ENCODE measurements at regions of chr11 and their contacts with region 1.

Region 1: DNA sequence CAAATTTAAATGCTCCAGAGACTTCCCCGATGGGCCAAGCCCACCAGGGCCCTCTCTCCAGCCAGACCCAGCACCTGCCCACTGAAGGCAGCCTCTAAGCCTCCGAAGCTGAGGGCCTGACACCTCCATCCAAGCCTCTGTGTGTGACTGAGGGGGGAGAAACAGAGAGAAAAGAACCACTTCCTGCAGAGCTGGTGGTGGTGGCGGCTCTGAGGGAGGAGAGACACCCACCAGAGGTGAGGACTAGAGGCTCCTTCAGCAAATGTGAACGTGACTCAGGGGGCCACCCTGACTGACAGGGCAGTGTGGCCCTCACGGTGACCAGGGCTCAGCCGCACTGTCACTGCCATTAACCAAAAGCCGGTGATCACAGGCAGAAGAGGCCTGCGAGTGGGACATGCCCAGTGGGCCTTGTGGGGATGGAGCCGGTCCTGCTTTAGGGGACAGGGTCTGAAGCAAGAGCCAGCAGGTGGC is 31.0 kb upstream of the CD5 start:
- DNase-seq: peak; percentile 37 to 88 (median 63)
- ATAC-seq: peak; percentile 95
- H3K4me3 ChIP-seq: no peak overlapping the region
- H3K4me3 Mint-ChIP-seq: peak overlapping the region; percentile 82
- H3K27ac ChIP-seq: peak overlapping the region; percentile 26 to 58
- H3K27ac Mint-ChIP-seq: peak overlapping the region; percentile 92
- H3K4me1 ChIP-seq: peaks cover 80% of the 10 kb centered on the region
- H3K4me1 Mint-ChIP-seq: peaks cover 95% of the 10 kb centered on the region
- H3K27me3 ChIP-seq: no peaks in the 10 kb centered on the region
- H3K27me3 Mint-ChIP-seq: no peaks in the 10 kb centered on the region
- CTCF ChIP-seq: no peak

Region 2: DNA sequence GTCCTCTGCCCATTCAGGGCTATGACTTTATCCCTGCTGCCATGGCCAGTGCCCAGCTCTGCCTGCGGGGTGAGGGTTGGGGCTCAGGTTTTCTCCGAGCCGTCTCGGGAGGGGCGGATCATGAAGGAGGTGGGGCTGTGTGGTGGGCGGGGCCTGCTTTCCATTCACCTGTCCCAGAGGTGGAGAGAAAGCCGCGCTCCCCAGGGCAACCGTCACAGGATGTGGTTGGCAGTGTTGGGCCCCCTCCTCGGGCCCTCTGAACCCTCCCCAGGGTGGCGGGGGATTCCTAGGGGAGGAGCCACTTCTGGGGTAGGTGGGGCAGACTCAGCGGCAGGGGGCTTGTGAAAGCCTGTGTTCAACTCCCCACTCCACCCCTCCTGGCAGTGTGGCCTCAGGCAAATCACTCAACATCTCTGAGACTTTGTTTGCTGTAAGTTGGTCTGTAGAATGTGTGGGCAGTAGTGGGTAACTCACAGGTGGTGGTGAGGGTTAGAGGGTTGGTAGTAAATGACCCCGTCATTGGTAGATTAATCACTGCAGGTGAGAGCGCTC is 49.5 kb before region 1 on chr11:
- CTCF ChIA-PET with region 1: interaction called, 7 read pairs
- POLR2A ChIA-PET with region 1: interaction called, 23 read pairs
- intact Hi-C with region 1: no loop called
- DNase-seq: peak; percentile 82 to 97 (median 92)
- ATAC-seq: peak; percentile 71
- H3K4me3 ChIP-seq: peak overlapping the region; percentile 21
- H3K4me3 Mint-ChIP-seq: peak overlapping the region; percentile 87
- H3K27ac ChIP-seq: peak overlapping the region; percentile 81 to 88
- H3K27ac Mint-ChIP-seq: peak overlapping the region; percentile 99
- H3K4me1 ChIP-seq: peaks cover 85% of the 10 kb centered on the region
- H3K4me1 Mint-ChIP-seq: peaks cover 85% of the 10 kb centered on the region
- H3K27me3 ChIP-seq: no peaks in the 10 kb centered on the region
- H3K27me3 Mint-ChIP-seq: no peaks in the 10 kb centered on the region
- CTCF ChIP-seq: no peak

Region 3: GRCh38 chr11:61049859-61050258 is 21.4 kb before region 1 on chr11:
- CTCF ChIA-PET with region 1: no interaction called
- POLR2A ChIA-PET with region 1: interaction called, 237 read pairs
- intact Hi-C with region 1: no loop called
- DNase-seq: no peak
- ATAC-seq: no peak
- H3K4me3 ChIP-seq: no peak overlapping the region
- H3K4me3 Mint-ChIP-seq: no peak overlapping the region
- H3K27ac ChIP-seq: no peak overlapping the region
- H3K27ac Mint-ChIP-seq: peak overlapping the region; percentile 81
- H3K4me1 ChIP-seq: peaks cover 44% of the 10 kb centered on the region
- H3K4me1 Mint-ChIP-seq: peaks cover 76% of the 10 kb centered on the region
- H3K27me3 ChIP-seq: no peaks in the 10 kb centered on the region
- H3K27me3 Mint-ChIP-seq: no peaks in the 10 kb centered on the region
- CTCF ChIP-seq: no peak

Region 4: DNA sequence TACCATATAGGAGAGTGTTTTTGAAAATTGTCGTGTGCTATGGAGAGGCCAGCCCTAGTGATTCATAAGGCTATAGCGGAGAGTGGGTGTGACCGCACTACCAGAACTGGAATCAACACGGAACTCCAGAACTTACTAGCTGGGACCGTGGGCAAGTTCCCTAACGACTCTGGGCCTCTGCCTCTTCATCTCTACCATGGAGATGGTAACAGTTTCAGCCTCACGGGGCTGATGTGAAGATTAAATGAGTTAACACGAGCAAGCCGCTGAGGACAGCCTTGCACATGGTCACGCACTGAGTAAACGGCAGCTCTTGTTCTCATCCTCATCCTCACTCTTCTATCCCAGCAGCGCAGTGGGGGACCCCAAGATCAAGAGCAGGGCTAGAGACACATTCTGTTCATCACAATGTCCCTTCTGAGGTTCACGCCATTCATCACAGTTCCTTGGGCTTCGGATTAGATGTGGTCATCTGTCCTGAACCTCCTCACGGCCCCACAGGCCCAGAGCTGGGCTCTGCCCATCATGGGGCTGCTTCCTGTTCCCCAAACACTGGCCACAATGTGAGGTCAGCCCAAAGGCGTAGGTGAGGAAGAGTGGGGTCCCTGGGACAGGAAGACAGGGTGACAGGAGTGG is 16.2 kb before region 1 on chr11:
- CTCF ChIA-PET with region 1: no interaction called
- POLR2A ChIA-PET with region 1: interaction called, 64 read pairs
- intact Hi-C with region 1: loop called in 1 of 2 experiments (anchors 2 kb)
- DNase-seq: peak in 1 of 14 experiments; percentile 7
- ATAC-seq: no peak
- H3K4me3 ChIP-seq: no peak overlapping the region
- H3K4me3 Mint-ChIP-seq: peak overlapping the region; percentile 54
- H3K27ac ChIP-seq: no peak overlapping the region
- H3K27ac Mint-ChIP-seq: peak overlapping the region; percentile 85
- H3K4me1 ChIP-seq: peaks cover 65% of the 10 kb centered on the region
- H3K4me1 Mint-ChIP-seq: peaks cover 65% of the 10 kb centered on the region
- H3K27me3 ChIP-seq: no peaks in the 10 kb centered on the region
- H3K27me3 Mint-ChIP-seq: no peaks in the 10 kb centered on the region
- CTCF ChIP-seq: no peak

Region 5: DNA sequence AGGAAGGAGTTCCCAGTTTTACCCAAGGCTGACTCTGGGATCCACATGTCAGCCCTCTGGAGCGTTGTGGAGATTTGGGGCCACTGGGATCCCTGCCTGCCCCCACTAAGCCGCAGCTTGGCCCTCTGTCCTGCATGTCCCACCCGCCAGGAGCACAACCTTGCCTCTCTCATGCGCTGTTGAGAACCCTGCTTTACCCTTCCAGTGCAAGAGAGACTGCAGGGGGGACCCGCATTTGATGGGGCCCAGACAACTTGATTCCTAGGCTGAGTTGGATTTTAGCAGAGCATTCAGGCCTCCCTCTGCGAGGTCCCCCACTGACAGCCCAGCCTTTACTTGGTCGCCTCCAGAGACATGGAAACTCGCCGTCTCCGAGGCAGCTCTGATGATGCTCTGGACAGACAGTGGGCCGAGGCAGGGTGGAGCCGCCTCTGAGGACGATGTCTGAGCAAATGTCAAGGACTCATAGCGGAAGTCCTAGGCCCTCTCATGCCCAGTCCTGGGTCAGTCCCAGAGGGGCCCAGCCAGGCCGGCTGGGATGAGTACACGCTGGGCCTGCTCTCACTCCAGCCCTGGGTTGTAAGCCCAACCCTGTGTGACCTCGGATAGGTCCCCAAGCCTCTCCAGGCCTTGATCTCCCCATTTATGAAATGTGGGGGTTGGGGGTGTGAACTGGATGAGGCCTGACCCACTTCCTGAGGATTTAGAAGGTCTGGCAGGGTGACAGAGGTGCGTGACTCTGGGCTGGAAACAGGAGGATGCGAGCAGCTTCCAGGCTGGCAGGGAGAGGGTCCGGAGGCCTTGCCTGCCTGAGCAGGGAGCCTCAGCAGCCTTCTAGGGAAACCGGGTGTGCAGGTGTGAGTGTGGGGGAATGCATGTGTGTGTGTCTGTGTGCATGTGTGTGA is 31.7 kb after region 1 on chr11:
- CTCF ChIA-PET with region 1: no interaction called
- POLR2A ChIA-PET with region 1: interaction called, 16 read pairs
- intact Hi-C with region 1: no loop called
- DNase-seq: peak in 4 of 14 experiments; percentile 47 to 78 (median 55)
- ATAC-seq: peak; percentile 22
- H3K4me3 ChIP-seq: peak overlapping the region; percentile 100
- H3K4me3 Mint-ChIP-seq: no peak overlapping the region
- H3K27ac ChIP-seq: peak overlapping the region; percentile 95 to 96
- H3K27ac Mint-ChIP-seq: no peak overlapping the region
- H3K4me1 ChIP-seq: peaks cover 58% of the 10 kb centered on the region
- H3K4me1 Mint-ChIP-seq: peaks cover 45% of the 10 kb centered on the region
- H3K27me3 ChIP-seq: no peaks in the 10 kb centered on the region
- H3K27me3 Mint-ChIP-seq: no peaks in the 10 kb centered on the region
- CTCF ChIP-seq: no peak